ENCODE measurements at regions of chr17 and their contacts with region 1.

Region 1: GRCh38 chr17:75240394-75241143 is 20.8 kb downstream of the GGA3 start:
- DNase-seq: peak; percentile 77
- H3K4me3 ChIP-seq: no peak overlapping the region
- H3K27ac ChIP-seq: no peak overlapping the region
- H3K4me1 ChIP-seq: peaks cover 6% of the 10 kb centered on the region
- H3K27me3 ChIP-seq: no peaks in the 10 kb centered on the region
- CTCF ChIP-seq: peak; percentile 92

Region 2: DNA sequence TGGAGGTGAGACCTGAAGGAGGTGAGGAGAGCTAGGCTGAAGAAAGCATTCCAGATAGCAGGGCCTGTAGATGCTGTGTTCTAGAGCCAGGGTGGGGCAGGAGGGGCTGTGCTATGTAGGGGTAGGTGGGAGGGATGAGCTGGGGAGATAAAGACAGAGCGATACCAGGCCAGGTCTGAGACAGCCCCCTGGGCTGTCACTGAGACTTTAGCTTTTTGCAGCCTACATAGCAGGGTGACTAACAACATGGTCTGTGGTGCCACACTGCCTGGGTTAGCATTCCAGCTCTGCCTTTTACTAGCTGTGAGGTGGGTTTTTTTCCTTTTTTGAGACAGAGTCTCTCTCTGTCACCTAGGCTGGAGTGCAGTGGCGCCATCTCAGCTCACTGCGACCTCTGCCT is 20.8 kb before region 1 on chr17:
- CTCF ChIA-PET with region 1: interaction called, 10 read pairs
- POLR2A ChIA-PET with region 1: interaction called, 6 read pairs
- intact Hi-C with region 1: no loop called
- DNase-seq: no peak
- H3K4me3 ChIP-seq: no peak overlapping the region
- H3K27ac ChIP-seq: no peak overlapping the region
- H3K4me1 ChIP-seq: no peaks in the 10 kb centered on the region
- H3K27me3 ChIP-seq: no peaks in the 10 kb centered on the region
- CTCF ChIP-seq: no peak

Region 3: GRCh38 chr17:75228305-75228704 is 12.3 kb before region 1 on chr17:
- CTCF ChIA-PET with region 1: interaction called, 4 read pairs
- POLR2A ChIA-PET with region 1: interaction called, 11 read pairs
- intact Hi-C with region 1: no loop called
- DNase-seq: no peak
- H3K4me3 ChIP-seq: no peak overlapping the region
- H3K27ac ChIP-seq: peak overlapping the region; percentile 24
- H3K4me1 ChIP-seq: no peaks in the 10 kb centered on the region
- H3K27me3 ChIP-seq: no peaks in the 10 kb centered on the region
- CTCF ChIP-seq: no peak

Region 4: GRCh38 chr17:75271233-75271954 is 30.8 kb after region 1 on chr17:
- CTCF ChIA-PET with region 1: interaction called, 11 read pairs
- POLR2A ChIA-PET with region 1: no interaction called
- intact Hi-C with region 1: no loop called
- DNase-seq: peak; percentile 89
- H3K4me3 ChIP-seq: peak overlapping the region; percentile 100
- H3K27ac ChIP-seq: peak overlapping the region; percentile 83
- H3K4me1 ChIP-seq: peaks cover 9% of the 10 kb centered on the region
- H3K27me3 ChIP-seq: no peaks in the 10 kb centered on the region
- CTCF ChIP-seq: peak; percentile 37; the same call in 1 of the 2 replicates

Measured in A673 (cell line).